ENCODE measurements at regions of chr12 and their contacts with region 1.

Region 1: DNA sequence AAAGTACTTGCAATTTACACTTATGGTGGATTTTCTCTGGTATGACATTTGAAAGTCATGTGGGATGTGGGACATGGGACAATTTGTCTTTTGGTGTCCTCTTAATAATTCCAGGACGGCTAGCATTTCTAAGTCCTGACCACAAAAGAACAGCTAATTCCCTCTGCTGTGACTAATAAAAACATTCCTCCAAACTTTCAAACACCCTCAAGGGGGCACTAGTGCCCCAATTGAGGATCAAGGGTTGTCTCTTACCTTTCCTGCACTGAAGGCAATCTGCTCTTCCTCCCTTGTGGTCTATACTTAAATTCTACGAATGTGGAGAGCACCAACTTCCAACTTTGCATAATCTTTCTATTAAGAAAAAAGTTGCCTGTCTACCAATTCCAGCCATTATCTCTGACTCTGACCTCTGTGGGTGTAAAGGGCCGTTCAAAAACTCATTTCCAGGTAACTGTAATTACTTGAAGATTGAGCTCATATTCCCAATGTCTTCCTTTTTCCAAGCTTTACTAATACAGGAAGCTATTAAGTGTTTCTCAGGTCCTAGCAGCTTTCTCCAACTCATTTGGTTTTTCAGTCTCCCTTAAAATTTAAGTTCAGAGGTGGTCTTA is 210.2 kb downstream of the PTPRO start:
- DNase-seq: peak; percentile 53
- H3K4me3 ChIP-seq: no peak overlapping the region
- H3K27ac ChIP-seq: peak overlapping the region in 3 of 4 donors; percentile 23 to 70 (median 58)
- H3K4me1 ChIP-seq: peaks cover 0 to 39% (median 21%) of the 10 kb centered on the region in 4 donors
- H3K27me3 ChIP-seq: no peaks in the 10 kb centered on the region
- CTCF ChIP-seq: peak; percentile 45 to 69 (median 54)
- EP300 ChIP-seq: no peak
- POLR2A ChIP-seq: no peak

Region 2: GRCh38 chr12:15584366-15585041 is 52.0 kb after region 1 on chr12:
- in situ Hi-C with region 1: loop called (anchors 5 to 10 kb)
- intact Hi-C with region 1: no loop called
- DNase-seq: no peak
- H3K4me3 ChIP-seq: no peak overlapping the region
- H3K27ac ChIP-seq: no peak overlapping the region
- H3K4me1 ChIP-seq: peaks cover 0 to 25% (median 6%) of the 10 kb centered on the region in 4 donors
- H3K27me3 ChIP-seq: no peaks in the 10 kb centered on the region
- CTCF ChIP-seq: peak; percentile 61 to 72 (median 67)
- EP300 ChIP-seq: no peak
- POLR2A ChIP-seq: no peak